ENCODE measurements at regions of chr6 and their contacts with region 1.

Region 1: GRCh38 chr6:129709769-129710449 is at the start of gene ARHGAP18:
- DNase-seq: peak; percentile 93
- ATAC-seq: peak; percentile 96 to 97
- H3K4me3 ChIP-seq: peak within 1 kb of the TSS; percentile 62 to 84 (median 71)
- H3K27ac ChIP-seq: peak within 1 kb of the TSS; percentile 83 to 92 (median 88)
- H3K4me1 ChIP-seq: peaks cover 20 to 46% of the 10 kb centered on the region in 2 donors
- H3K27me3 ChIP-seq: no peaks in the 10 kb centered on the region
- CTCF ChIP-seq: no peak
- POLR2A ChIP-seq: peak; percentile 67 to 90
- total RNA-seq, gene ARHGAP18: 5.2 to 9.2 (median 6.5) TPM

Region 2: GRCh38 chr6:129683601-129684322 is 26.1 kb before region 1 on chr6:
- in situ Hi-C with region 1: no loop called
- intact Hi-C with region 1: loop called (anchors 2 kb)
- DNase-seq: peak; percentile 77 to 84
- ATAC-seq: peak; percentile 92 to 93
- H3K4me3 ChIP-seq: no peak overlapping the region
- H3K27ac ChIP-seq: peak overlapping the region; percentile 76 to 93 (median 86)
- H3K4me1 ChIP-seq: peaks cover 53 to 79% of the 10 kb centered on the region in 2 donors
- H3K27me3 ChIP-seq: no peaks in the 10 kb centered on the region
- CTCF ChIP-seq: no peak
- POLR2A ChIP-seq: peak in 1 of 2 donors; percentile 51

Region 3: DNA sequence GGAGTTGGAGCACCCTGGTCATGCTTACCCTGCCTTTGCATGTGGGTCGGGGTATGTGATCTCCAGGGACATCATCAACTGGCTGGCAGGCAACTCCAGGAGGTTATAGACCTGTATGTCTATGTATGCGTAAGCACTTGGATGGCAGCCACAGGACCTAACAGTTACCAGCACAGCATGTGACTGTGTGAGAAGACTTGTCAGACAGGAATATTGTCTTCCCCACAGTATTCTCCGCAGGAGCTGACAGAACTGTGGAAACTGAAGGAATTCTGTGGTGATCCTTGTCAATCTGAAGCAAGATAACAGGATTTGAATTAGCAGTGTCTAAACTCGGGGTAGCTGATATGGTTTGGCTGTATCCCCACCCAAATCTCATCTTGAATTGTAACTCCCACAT is 92.0 kb after region 1 on chr6:
- in situ Hi-C with region 1: no loop called
- intact Hi-C with region 1: no loop called
- DNase-seq: no peak
- ATAC-seq: no peak
- H3K4me3 ChIP-seq: no peak overlapping the region
- H3K27ac ChIP-seq: no peak overlapping the region
- H3K4me1 ChIP-seq: no peaks in the 10 kb centered on the region
- H3K27me3 ChIP-seq: no peaks in the 10 kb centered on the region
- CTCF ChIP-seq: no peak
- POLR2A ChIP-seq: no peak

Measured in gastrocnemius medialis (tissue), 4 donors.